ENCODE measurements at regions of chr3 and their contacts with region 1.

Region 1: GRCh38 chr3:156382458-156383346 is 172.2 kb downstream of the SSR3 start:
- DNase-seq: peak in 1 of 2 experiments; percentile 80
- H3K4me3 ChIP-seq: no peak overlapping the region
- H3K27ac ChIP-seq: no peak overlapping the region
- H3K4me1 ChIP-seq: no peaks in the 10 kb centered on the region
- H3K27me3 ChIP-seq: no peaks in the 10 kb centered on the region
- CTCF ChIP-seq: peak; percentile 80 to 86 (median 86)
- EP300 ChIP-seq: no peak
- POLR2A ChIP-seq: no peak
- RAD21 ChIP-seq: peak; percentile 83 to 90

Region 2: GRCh38 chr3:156044634-156044975 is 338.1 kb before region 1 on chr3:
- CTCF ChIA-PET with region 1: interaction called, 23 read pairs
- POLR2A ChIA-PET with region 1: no interaction called
- DNase-seq: no peak
- H3K4me3 ChIP-seq: no peak overlapping the region
- H3K27ac ChIP-seq: no peak overlapping the region
- H3K4me1 ChIP-seq: no peaks in the 10 kb centered on the region
- H3K27me3 ChIP-seq: no peaks in the 10 kb centered on the region
- CTCF ChIP-seq: no peak
- EP300 ChIP-seq: no peak
- POLR2A ChIP-seq: no peak
- RAD21 ChIP-seq: no peak

Region 3: DNA sequence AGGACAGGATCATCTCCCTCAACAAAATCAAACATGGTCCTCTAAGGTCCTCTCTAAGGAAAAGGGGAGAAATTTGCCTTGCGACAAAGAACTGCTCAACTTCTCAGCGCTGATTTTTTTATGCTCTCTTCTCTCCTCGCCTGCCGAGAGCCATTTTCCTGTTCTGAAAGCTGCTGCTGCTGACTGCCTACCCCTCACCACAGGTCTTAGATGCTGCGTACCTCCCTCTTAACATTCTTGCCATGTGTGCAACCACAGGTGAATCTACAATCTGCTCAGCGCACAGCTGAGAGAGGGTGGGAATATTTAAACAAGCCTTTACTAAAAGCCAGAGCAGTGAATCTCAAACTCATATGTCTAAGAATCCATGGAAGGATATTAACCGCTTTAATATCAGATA is 38.5 kb before region 1 on chr3:
- CTCF ChIA-PET with region 1: interaction called, 10 read pairs
- POLR2A ChIA-PET with region 1: no interaction called
- DNase-seq: no peak
- H3K4me3 ChIP-seq: no peak overlapping the region
- H3K27ac ChIP-seq: no peak overlapping the region
- H3K4me1 ChIP-seq: no peaks in the 10 kb centered on the region
- H3K27me3 ChIP-seq: no peaks in the 10 kb centered on the region
- CTCF ChIP-seq: no peak
- EP300 ChIP-seq: no peak
- POLR2A ChIP-seq: no peak
- RAD21 ChIP-seq: no peak

Region 4: GRCh38 chr3:156368189-156368588 is 14.5 kb before region 1 on chr3:
- CTCF ChIA-PET with region 1: interaction called, 26 read pairs
- POLR2A ChIA-PET with region 1: no interaction called
- DNase-seq: no peak
- H3K4me3 ChIP-seq: no peak overlapping the region
- H3K27ac ChIP-seq: no peak overlapping the region
- H3K4me1 ChIP-seq: peaks cover 5 to 17% (median 8%) of the 10 kb centered on the region in 4 experiments; a peak in 6 of 7 replicates
- H3K27me3 ChIP-seq: no peaks in the 10 kb centered on the region
- CTCF ChIP-seq: no peak
- EP300 ChIP-seq: no peak
- POLR2A ChIP-seq: no peak
- RAD21 ChIP-seq: no peak

Region 5: GRCh38 chr3:156413293-156413892 is 30.7 kb after region 1 on chr3:
- CTCF ChIA-PET with region 1: no interaction called
- POLR2A ChIA-PET with region 1: no interaction called
- DNase-seq: no peak
- H3K4me3 ChIP-seq: no peak overlapping the region
- H3K27ac ChIP-seq: no peak overlapping the region
- H3K4me1 ChIP-seq: peaks cover 0 to 4% (median 2%) of the 10 kb centered on the region in 4 experiments; a peak in 2 of 7 replicates
- H3K27me3 ChIP-seq: no peaks in the 10 kb centered on the region
- CTCF ChIP-seq: no peak
- EP300 ChIP-seq: no peak
- POLR2A ChIP-seq: no peak
- RAD21 ChIP-seq: no peak

Region 6: GRCh38 chr3:156474560-156475389 is 92.1 kb after region 1 on chr3:
- CTCF ChIA-PET with region 1: interaction called, 11 read pairs
- POLR2A ChIA-PET with region 1: no interaction called
- DNase-seq: no peak
- H3K4me3 ChIP-seq: peak overlapping the region in 2 of 4 experiments; percentile 10 to 38; a peak in 2 of 8 replicates
- H3K27ac ChIP-seq: no peak overlapping the region
- H3K4me1 ChIP-seq: no peaks in the 10 kb centered on the region
- H3K27me3 ChIP-seq: no peaks in the 10 kb centered on the region
- CTCF ChIP-seq: peak; percentile 46 to 66 (median 66)
- EP300 ChIP-seq: no peak
- POLR2A ChIP-seq: no peak
- RAD21 ChIP-seq: peak; percentile 54 to 66

Measured in H1 (cell line).